ENCODE measurements at regions of chr19 and their contacts with region 1.

Region 1: DNA sequence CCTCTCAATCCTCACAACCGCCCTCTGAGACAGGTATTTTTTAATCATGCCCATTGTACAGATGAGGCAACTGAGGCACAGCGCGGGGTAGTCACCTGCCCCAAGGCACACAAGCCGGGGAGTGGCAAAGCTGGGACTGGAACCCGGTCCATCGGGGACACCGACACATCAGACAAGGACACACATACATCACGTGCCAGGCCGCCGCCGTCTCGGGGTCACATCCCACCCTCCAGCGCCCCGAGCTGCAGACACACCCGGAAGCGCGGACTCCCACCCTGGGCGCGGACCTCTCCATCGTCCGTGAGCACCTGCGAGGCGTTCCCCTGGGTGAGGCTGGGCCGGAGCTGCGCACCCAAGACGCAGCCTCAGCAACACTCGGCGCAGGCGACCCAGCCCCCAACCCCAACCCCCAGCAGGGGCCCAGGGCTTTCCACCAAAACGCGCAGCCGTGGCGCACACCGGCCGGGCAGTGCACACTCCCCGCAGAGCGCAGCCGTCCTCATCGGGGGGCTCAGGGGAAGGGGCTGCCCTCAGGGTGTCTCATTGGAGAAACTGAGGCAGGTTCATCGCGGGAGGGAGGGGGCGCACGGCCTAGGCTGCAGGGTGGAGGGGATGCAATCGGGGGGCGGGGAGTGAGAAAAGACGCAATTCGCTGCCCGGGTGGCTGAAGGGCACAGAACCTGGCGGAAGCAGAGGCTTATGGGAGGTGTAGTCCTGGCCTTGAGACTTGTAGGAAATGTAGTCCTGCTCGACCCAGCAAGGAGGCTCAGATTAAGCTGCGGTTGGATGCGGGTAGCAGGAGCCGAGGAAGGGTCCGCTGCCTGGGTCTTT is 1.9 kb upstream of the LMTK3 start:
- DNase-seq: peak; percentile 51
- ATAC-seq: peak; percentile 90
- H3K4me3 Mint-ChIP-seq: no peak overlapping the region
- H3K27ac Mint-ChIP-seq: peak overlapping the region; percentile 69
- H3K4me1 Mint-ChIP-seq: peaks cover 17% of the 10 kb centered on the region
- H3K27me3 Mint-ChIP-seq: peaks cover 2% of the 10 kb centered on the region
- CTCF ChIP-seq: no peak

Region 2: DNA sequence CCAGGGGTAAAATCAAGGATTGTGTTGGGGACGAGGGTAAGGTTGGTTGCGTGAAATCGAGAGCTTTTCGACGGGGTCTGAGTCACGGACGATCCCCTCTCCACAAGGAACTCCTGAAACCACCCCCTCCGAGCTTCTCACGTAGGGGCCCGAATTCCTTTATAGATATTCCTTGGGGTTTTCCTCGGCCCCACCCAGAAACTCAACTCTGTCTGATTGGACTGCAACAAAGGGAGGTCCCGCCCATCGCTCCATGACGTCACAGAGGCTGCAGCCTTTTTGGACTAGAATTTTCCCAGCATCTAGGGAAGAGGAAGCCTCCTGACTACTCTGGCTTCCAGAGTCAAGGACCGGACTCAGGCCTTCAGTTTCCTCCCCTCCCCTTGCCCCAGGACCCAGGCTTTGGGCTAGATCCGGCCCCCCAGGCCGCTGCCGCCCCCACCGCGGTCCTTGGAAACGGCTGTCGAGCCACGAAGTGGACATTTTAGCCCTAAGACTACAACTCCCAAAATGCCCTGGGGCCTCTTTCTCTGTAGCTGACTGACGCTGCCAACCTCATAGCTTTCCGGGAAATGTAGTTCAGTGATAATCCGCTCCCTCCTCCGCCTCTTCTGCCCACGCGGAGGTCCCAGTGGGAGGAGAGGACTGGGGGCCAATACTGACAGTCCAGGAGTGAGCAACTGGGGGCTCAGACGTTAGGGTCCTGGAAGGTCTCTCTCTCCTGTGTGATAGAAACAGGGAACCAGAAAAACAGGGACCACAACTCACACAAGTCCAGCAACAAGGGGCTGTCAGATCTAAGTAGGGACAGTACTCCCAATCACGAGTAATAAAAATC is 233.5 kb after region 1 on chr19 and contains the start of gene IZUMO1:
- CTCF ChIA-PET with region 1: no interaction called
- POLR2A ChIA-PET with region 1: no interaction called
- intact Hi-C with region 1: loop called (anchors 5 kb)
- DNase-seq: no peak
- ATAC-seq: peak; percentile 88
- H3K4me3 Mint-ChIP-seq: no peak within 1 kb of the TSS
- H3K27ac Mint-ChIP-seq: no peak within 1 kb of the TSS
- H3K4me1 Mint-ChIP-seq: peaks cover 3% of the 10 kb centered on the region
- H3K27me3 Mint-ChIP-seq: peaks cover 29% of the 10 kb centered on the region
- CTCF ChIP-seq: no peak
- total RNA-seq, gene IZUMO1: not detected in 2 replicates

Measured in activated B cell treated with CpG ODN at 0.5 μM for 24 hours (primary cell).